Thyroid gland (tissue), 4 donors: ENCODE measurements at regions of chr16 and their contacts with region 1.

Region 1: GRCh38 chr16:81314603-81315270 is at the start of gene GAN:
- DNase-seq: peak; percentile 96
- H3K4me3 ChIP-seq: peak within 1 kb of the TSS; percentile 50 to 78 (median 71)
- H3K27ac ChIP-seq: peak within 1 kb of the TSS; percentile 64 to 91 (median 89)
- H3K4me1 ChIP-seq: peaks cover 15 to 24% of the 10 kb centered on the region in 2 donors
- H3K27me3 ChIP-seq: no peaks in the 10 kb centered on the region
- CTCF ChIP-seq: no peak
- POLR2A ChIP-seq: peak; percentile 32 to 95
- total RNA-seq, gene GAN: 8.7 to 12.8 (median 9.5) TPM

Region 2: DNA sequence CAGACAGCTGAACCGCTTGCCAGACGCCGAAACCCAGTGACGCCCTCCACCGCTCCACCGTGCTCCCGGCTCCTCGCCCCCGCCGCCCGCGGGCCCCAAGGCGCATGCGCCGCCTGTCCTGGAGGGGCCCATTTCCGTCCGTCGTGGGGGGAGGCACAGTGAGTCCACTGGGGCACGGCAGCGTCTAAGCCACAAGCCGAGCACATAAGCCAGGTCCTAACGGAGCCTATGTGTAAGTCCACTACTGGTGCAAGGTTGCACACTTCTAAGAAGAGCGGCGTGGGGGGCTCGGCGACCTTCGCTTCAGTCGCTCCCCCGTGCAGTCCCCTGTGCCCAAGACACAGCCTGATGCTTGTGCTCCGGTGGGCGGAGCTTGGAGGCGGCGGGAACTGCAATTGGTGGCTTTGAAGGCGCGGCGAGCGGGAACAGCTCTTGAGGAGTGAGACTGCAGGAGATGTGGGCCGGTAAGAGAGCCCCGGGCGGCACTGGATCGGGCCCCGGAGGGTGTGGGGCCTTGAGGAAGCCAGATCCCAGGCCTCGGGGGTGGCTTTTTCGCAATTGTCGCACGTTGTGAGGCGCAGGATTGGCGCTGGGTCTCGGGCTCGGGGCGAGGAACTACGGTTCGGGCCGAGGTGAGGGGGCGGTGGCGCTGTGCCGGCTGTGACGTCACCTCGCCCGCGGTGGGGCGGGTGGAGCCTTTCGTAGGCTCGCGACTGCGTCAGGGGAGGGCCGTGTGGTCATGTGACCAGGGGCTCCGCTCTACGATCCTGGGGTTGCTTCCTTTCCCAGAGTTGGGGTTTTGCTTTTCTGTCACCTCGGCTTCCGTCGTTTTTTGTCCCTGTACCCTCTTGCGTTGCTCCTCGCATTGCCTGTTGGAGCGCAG is 307.7 kb before region 1 on chr16 and contains the starts of genes CENPN and CMC2:
- intact Hi-C with region 1: loop called (anchors 10 kb)
- DNase-seq: peak; percentile 100
- H3K4me3 ChIP-seq: peak within 1 kb of the TSS; percentile 59 to 98 (median 85)
- H3K27ac ChIP-seq: peak within 1 kb of the TSS; percentile 93 to 99 (median 94)
- H3K4me1 ChIP-seq: peaks cover 10 to 22% of the 10 kb centered on the region in 2 donors
- H3K27me3 ChIP-seq: no peaks in the 10 kb centered on the region
- CTCF ChIP-seq: peak in 1 of 6 experiments; percentile 18
- POLR2A ChIP-seq: peak in 1 of 2 donors; percentile 91
- total RNA-seq, gene CENPN: 5.8 to 14.4 (median 6.7) TPM
- total RNA-seq, gene CMC2: 36.8 to 89.1 (median 59.7) TPM

Region 3: GRCh38 chr16:81095953-81096717 is 218.6 kb before region 1 on chr16 and contains the start of gene GCSH:
- intact Hi-C with region 1: loop called (anchors 10 kb)
- DNase-seq: peak; percentile 100
- H3K4me3 ChIP-seq: peak within 1 kb of the TSS; percentile 37 to 62 (median 61)
- H3K27ac ChIP-seq: peak within 1 kb of the TSS; percentile 76 to 87 (median 87)
- H3K4me1 ChIP-seq: peaks cover 23 to 29% of the 10 kb centered on the region in 2 donors
- H3K27me3 ChIP-seq: no peaks in the 10 kb centered on the region
- CTCF ChIP-seq: no peak
- POLR2A ChIP-seq: peak in 1 of 2 donors; percentile 76
- total RNA-seq, gene GCSH: 48.8 to 82.1 (median 60.7) TPM